CD4-positive, alpha-beta memory T cell (primary cell): ENCODE measurements at regions of chr4 and their contacts with region 1.

Region 1: DNA sequence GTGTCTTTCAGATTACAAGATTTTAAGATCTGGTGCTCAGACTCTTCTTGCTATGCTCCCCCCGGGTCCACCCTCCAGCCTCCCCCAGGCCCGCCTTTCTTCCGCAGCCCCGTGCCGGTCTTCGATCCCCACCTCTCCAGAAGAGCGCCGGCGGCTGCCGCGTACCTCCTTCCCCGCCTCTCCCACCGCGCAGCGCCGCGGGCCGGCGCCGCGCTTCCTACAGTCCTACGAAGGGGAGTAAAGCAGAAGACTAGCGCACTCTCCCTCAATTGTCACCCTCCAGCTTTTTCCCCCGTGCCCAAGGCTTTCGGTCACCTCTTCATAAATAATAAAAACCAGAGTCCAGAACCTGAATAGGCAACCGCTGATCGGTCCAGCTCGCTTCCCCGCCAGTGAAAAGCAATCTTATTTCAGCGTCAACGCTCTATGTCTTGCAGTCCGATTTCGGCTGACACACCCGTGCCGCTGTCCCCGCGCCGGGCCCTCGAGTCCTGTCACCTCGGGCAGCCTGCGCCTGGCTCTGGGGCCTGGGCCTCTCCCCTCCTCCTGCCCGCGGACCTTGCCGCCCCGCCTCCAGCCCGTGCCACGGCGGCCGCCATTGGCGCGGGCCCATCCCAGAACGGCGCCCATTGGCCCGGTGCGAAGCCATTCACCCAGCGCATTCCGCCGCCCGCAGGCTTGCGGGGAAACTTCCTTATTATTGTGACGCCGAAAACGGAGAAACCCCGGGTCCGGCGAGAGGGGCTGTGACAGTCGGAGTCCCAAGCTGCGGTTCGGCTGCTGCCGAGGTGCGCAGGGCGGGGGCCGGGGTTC is at the start of gene HERC3:
- DNase-seq: peak; percentile 87 to 91 (median 90)
- H3K4me3 ChIP-seq: peak within 1 kb of the TSS; percentile 33 to 74
- H3K4me3 Mint-ChIP-seq: peak within 1 kb of the TSS; percentile 95 to 99 (median 98)
- H3K27ac ChIP-seq: peak within 1 kb of the TSS; percentile 89
- H3K27ac Mint-ChIP-seq: peak within 1 kb of the TSS; percentile 96 to 99 (median 99)
- H3K4me1 ChIP-seq: peaks cover 32% of the 10 kb centered on the region
- H3K4me1 Mint-ChIP-seq: peaks cover 29 to 54% (median 37%) of the 10 kb centered on the region in 4 donors
- H3K27me3 ChIP-seq: no peaks in the 10 kb centered on the region
- H3K27me3 Mint-ChIP-seq: no peaks in the 10 kb centered on the region
- total RNA-seq, gene HERC3: 95.5 to 97.1 TPM

Region 2: DNA sequence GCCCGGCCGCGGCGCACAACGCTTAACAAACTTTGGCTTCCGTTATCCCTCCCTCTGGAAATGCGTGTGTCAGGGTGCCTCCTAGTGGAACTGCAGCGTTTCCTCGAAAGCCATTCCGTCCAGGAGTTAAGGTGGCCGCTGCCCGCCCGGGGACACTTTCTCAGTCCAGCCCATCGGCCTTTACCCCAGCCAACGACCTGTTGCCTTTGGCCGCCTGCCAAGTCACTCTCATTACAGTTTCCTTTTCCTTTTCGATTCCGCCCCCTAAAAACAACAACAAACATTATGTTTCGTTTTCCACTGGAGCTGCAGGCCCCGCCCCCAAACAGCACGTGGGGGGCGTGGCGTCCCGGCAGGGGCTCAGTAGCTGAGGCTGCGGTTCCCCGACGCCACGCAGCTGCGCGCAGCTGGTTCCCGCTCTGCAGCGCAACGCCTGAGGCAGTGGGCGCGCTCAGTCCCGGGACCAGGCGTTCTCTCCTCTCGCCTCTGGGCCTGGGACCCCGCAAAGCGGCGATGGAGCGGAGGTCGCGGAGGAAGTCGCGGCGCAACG is 135.2 kb before region 1 on chr4 and contains the start of gene HERC5:
- CTCF ChIA-PET with region 1: no interaction called
- POLR2A ChIA-PET with region 1: interaction called, 10 read pairs
- intact Hi-C with region 1: loop called (anchors 2 kb)
- DNase-seq: peak; percentile 92 to 96 (median 95)
- H3K4me3 ChIP-seq: peak within 1 kb of the TSS; percentile 76 to 96
- H3K4me3 Mint-ChIP-seq: peak within 1 kb of the TSS; percentile 96 to 100 (median 100)
- H3K27ac ChIP-seq: peak within 1 kb of the TSS; percentile 71
- H3K27ac Mint-ChIP-seq: peak within 1 kb of the TSS; percentile 89 to 100 (median 100)
- H3K4me1 ChIP-seq: peaks cover 28% of the 10 kb centered on the region
- H3K4me1 Mint-ChIP-seq: peaks cover 21 to 37% (median 28%) of the 10 kb centered on the region in 4 donors
- H3K27me3 ChIP-seq: no peaks in the 10 kb centered on the region
- H3K27me3 Mint-ChIP-seq: no peaks in the 10 kb centered on the region
- total RNA-seq, gene HERC5: 18.6 to 22.1 TPM

Region 3: DNA sequence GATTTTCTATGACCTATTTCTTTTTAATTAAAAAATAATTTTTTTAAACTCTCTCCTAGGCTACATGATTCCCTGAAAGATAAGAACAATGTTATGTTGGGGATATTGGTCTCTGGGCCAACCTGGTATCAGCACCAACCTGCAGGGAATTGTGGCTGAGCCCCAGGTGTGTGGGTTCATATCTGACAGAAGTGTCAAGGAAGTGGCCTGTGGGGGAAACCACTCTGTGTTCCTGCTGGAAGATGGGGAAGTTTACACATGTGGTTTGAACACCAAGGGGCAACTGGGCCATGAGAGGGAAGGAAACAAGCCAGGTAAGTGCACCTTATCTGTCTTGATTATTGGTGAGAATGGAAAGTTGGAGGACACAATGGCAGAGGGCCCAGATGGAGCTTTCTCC is 13.7 kb after region 1 on chr4:
- CTCF ChIA-PET with region 1: interaction called, 53 read pairs
- POLR2A ChIA-PET with region 1: interaction called, 163 read pairs
- intact Hi-C with region 1: no loop called
- DNase-seq: peak; percentile 31 to 46 (median 33)
- H3K4me3 ChIP-seq: no peak overlapping the region
- H3K4me3 Mint-ChIP-seq: peak overlapping the region in 7 of 8 donors; percentile 22 to 78 (median 55)
- H3K27ac ChIP-seq: no peak overlapping the region
- H3K27ac Mint-ChIP-seq: peak overlapping the region; percentile 5 to 72 (median 32)
- H3K4me1 ChIP-seq: peaks cover 56% of the 10 kb centered on the region
- H3K4me1 Mint-ChIP-seq: peaks cover 41 to 80% (median 60%) of the 10 kb centered on the region in 4 donors
- H3K27me3 ChIP-seq: no peaks in the 10 kb centered on the region
- H3K27me3 Mint-ChIP-seq: no peaks in the 10 kb centered on the region

Region 4: DNA sequence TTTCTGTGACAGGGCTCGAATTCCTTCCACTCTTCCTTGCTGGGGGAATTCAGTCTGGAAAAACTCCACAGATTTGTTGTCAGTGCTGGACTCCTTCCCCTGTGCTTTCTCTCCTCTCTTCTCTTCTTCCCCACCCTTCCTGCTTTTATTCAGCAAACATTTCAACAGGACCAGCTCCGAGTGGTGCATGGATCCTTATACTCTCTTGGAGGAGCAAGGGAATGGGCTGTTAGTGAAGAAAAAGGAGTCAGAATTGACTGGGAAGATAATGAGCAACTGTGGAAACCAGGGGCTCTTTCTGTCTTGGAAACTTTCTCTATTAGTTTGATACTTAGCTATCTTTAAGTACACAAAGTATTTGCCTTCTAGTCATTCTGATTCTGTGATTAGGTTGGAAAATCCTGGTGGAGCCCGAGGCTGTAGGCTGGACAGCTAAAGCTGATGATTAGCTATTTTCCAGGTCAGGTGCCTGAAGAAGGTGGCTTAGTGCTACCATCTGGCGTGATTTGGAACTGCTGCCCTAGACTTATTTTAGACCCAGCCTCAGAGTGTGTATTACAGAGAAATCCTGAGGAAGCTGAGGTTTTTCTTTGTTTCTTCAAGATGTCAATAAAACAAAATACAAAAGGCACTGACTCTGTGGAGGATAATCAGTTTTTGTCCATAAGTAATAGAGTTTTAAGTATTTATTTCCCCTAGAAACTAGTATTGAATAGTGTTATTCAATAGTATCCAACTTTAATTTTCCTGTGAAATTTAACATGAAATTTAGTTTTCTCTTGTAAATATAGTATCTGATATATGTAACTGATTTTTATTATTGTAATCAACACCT is 67.3 kb after region 1 on chr4:
- CTCF ChIA-PET with region 1: interaction called, 3 read pairs
- POLR2A ChIA-PET with region 1: interaction called, 10 read pairs
- intact Hi-C with region 1: loop called (anchors 2 kb)
- DNase-seq: peak; percentile 32 to 47 (median 41)
- H3K4me3 ChIP-seq: no peak overlapping the region
- H3K4me3 Mint-ChIP-seq: no peak overlapping the region
- H3K27ac ChIP-seq: no peak overlapping the region
- H3K27ac Mint-ChIP-seq: peak overlapping the region in 5 of 7 donors; percentile 2 to 71 (median 55)
- H3K4me1 ChIP-seq: peaks cover 5% of the 10 kb centered on the region
- H3K4me1 Mint-ChIP-seq: peaks cover 6 to 18% (median 9%) of the 10 kb centered on the region in 4 donors
- H3K27me3 ChIP-seq: no peaks in the 10 kb centered on the region
- H3K27me3 Mint-ChIP-seq: no peaks in the 10 kb centered on the region